OCI-LY7 (cell line): ENCODE measurements at regions of chr12 and their contacts with region 1.

Region 1: GRCh38 chr12:12376646-12377448 is 20.0 kb downstream of the BORCS5 start:
- DNase-seq: peak; percentile 87
- H3K4me3 ChIP-seq: no peak overlapping the region
- H3K27ac ChIP-seq: no peak overlapping the region
- H3K4me1 ChIP-seq: no peaks in the 10 kb centered on the region
- CTCF ChIP-seq: peak; percentile 93

Region 2: DNA sequence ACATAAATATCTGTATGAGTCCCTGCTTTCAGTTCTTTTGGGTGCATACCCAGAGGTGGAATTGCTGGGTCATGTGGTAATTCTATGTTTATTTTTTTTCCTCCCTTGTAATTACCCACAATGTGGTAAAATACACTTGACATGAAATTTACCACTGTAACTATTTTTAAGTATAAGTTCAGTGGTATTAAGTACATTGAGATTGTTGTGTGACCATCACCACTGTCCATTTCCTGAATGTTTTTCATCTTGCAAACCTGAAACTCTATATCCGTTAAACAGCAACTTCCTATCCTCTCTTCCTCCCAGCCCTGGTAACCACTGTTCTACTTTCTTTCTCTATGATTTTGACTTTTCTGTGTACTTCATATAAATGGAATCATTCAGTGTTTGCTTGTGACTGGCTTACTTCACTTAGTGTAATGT is 31.4 kb after region 1 on chr12:
- CTCF ChIA-PET with region 1: no interaction called
- POLR2A ChIA-PET with region 1: no interaction called
- intact Hi-C with region 1: no loop called
- DNase-seq: no peak
- H3K4me3 ChIP-seq: no peak overlapping the region
- H3K27ac ChIP-seq: no peak overlapping the region
- H3K4me1 ChIP-seq: no peaks in the 10 kb centered on the region
- CTCF ChIP-seq: no peak

Region 3: DNA sequence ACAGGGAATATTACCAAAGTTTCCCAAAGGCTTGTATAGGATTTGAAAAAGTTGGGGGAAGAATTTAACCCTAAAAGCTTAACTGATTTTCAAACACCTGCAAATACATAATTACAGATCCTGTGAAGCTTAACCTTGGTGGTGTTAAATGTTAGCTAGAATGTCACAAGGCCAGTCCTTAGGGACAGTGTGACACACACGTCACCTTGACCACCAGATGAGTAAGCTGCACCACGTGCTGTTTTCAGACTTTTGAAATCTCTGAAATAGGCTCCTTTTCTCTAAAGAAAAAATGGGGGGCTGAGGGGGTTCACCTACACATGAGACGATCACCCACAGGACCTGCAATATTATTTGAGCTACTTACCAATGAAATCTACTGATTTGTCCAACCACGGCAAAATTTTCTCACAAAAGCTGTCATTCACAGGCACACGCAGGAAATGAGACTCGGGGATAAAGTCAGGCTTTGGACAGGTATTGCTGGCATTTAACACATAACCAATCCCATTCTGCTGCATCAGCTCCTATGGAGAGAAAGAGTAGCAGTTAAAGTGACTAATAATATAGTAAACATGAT is 109.9 kb after region 1 on chr12:
- CTCF ChIA-PET with region 1: no interaction called
- POLR2A ChIA-PET with region 1: no interaction called
- intact Hi-C with region 1: no loop called
- DNase-seq: no peak
- H3K4me3 ChIP-seq: no peak overlapping the region
- H3K27ac ChIP-seq: no peak overlapping the region
- H3K4me1 ChIP-seq: no peaks in the 10 kb centered on the region
- CTCF ChIP-seq: no peak

Region 4: DNA sequence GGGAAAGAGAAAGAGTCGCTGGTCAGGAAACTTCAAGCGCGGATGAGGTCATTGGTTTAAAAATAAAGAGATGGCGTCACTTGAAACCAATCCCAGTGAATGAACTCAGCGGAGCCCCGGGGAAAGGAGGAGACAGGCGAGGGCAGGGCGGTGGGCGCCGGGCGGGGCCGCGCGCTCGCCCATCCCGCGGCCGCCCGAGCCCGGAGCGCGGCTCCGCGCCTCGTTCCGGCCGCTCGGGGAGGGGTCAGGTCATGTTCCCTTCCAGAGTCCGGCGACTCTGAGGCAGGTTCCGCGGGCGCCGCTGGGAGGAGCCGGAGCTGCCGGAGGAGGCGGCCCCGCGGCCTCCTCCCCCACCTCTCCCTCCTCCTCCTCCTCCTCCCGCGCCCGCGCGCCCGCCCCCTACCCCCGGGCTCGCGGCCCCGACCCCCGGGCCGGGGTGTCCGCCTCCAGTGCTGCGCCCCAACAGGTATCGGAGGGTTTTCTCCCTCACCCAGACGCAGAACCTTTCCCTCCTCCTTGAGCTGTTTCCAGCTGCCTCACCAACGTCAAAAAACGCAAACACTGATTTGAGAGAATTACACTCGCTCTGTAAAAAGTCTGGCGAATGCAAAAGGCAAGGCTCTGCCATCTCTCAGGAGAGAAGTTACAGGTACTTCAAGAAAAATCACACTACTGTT is 185.9 kb after region 1 on chr12 and contains the start of gene DUSP16:
- CTCF ChIA-PET with region 1: no interaction called
- POLR2A ChIA-PET with region 1: interaction called, 5 read pairs
- intact Hi-C with region 1: loop called (anchors 1 kb)
- DNase-seq: peak; percentile 79
- H3K4me3 ChIP-seq: peak within 1 kb of the TSS; percentile 72
- H3K27ac ChIP-seq: peak within 1 kb of the TSS; percentile 59
- H3K4me1 ChIP-seq: peaks cover 26% of the 10 kb centered on the region
- CTCF ChIP-seq: peak; percentile 17; the same call in 1 of the 2 replicates
- total RNA-seq, gene DUSP16: 2.8 and 3.7 TPM in 2 replicates

Region 5: GRCh38 chr12:12661086-12661485 is 284.2 kb after region 1 on chr12:
- CTCF ChIA-PET with region 1: no interaction called
- POLR2A ChIA-PET with region 1: no interaction called
- intact Hi-C with region 1: loop called (anchors 1 kb)
- DNase-seq: no peak
- H3K4me3 ChIP-seq: no peak overlapping the region
- H3K27ac ChIP-seq: no peak overlapping the region
- H3K4me1 ChIP-seq: peaks cover 2% of the 10 kb centered on the region
- CTCF ChIP-seq: no peak

Region 6: GRCh38 chr12:12736759-12737676 is 360.2 kb after region 1 on chr12:
- CTCF ChIA-PET with region 1: no interaction called
- POLR2A ChIA-PET with region 1: interaction called, 4 read pairs
- intact Hi-C with region 1: loop called (anchors 2 kb)
- DNase-seq: peak; percentile 70
- H3K4me3 ChIP-seq: peak overlapping the region; percentile 17
- H3K27ac ChIP-seq: peak overlapping the region; percentile 72
- H3K4me1 ChIP-seq: peaks cover 17% of the 10 kb centered on the region
- CTCF ChIP-seq: peak; percentile 95